SK-N-SH (cell line): ENCODE measurements at regions of chr7 and their contacts with region 1.

Region 1: GRCh38 chr7:90595801-90596671 is at the start of gene CDK14:
- DNase-seq: peak; percentile 96
- H3K4me3 ChIP-seq: peak within 1 kb of the TSS; percentile 96 to 99
- H3K27ac ChIP-seq: peak within 1 kb of the TSS; percentile 81 to 85
- H3K4me1 ChIP-seq: peaks cover 21 to 32% of the 10 kb centered on the region in 2 experiments
- H3K27me3 ChIP-seq: no peaks in the 10 kb centered on the region
- CTCF ChIP-seq: peak; percentile 48
- EP300 ChIP-seq: peak in 1 of 2 experiments; percentile 44; a peak in 1 of 4 replicates
- RAD21 ChIP-seq: no peak
- polyA plus RNA-seq, gene CDK14: 13.9 and 15.6 TPM in 2 replicates

Region 2: GRCh38 chr7:90621125-90621746 is 25.2 kb after region 1 on chr7:
- CTCF ChIA-PET with region 1: interaction called, 32 read pairs
- POLR2A ChIA-PET with region 1: no interaction called
- DNase-seq: no peak
- H3K4me3 ChIP-seq: no peak overlapping the region
- H3K27ac ChIP-seq: no peak overlapping the region
- H3K4me1 ChIP-seq: peaks cover 12 to 55% of the 10 kb centered on the region in 2 experiments
- H3K27me3 ChIP-seq: no peaks in the 10 kb centered on the region
- CTCF ChIP-seq: no peak
- EP300 ChIP-seq: no peak
- RAD21 ChIP-seq: no peak